MCF 10A (cell line): ENCODE measurements at regions of chr2 and their contacts with region 1.

Region 1: DNA sequence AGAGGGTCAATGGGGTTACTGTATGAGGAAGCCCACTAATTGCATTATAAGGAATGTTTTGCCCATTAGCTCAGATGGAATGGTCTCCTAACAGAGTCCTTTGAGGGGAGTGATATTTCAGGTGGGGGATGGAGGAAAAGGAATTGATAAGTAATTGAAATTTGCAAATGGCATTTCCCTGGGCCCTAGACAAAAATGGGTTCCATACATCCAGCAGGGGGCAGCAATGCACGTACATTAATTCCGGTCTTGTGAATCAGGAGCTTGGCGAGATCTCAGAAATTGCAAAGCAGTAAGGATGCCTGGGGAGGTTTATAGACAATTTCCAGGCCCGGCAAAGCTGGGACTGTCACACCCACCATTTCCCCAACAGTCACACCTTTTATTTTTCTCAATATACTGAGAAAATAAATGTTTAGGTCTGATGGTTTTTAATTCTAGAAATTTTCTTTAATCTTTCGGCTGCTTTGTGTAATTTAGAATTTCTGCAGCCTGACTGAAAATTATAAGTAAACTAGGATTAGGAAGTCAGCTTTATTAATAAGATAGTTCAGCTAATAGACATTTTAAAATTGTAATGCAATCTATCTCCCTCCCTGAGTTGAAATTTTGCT is 122.8 kb downstream of the LYPD1 start:
- DNase-seq: peak; percentile 84
- H3K4me3 Mint-ChIP-seq: no peak overlapping the region
- H3K27ac Mint-ChIP-seq: no peak overlapping the region
- H3K4me1 Mint-ChIP-seq: peaks cover 17% of the 10 kb centered on the region
- H3K27me3 Mint-ChIP-seq: no peaks in the 10 kb centered on the region
- CTCF ChIP-seq: peak; percentile 76

Region 2: DNA sequence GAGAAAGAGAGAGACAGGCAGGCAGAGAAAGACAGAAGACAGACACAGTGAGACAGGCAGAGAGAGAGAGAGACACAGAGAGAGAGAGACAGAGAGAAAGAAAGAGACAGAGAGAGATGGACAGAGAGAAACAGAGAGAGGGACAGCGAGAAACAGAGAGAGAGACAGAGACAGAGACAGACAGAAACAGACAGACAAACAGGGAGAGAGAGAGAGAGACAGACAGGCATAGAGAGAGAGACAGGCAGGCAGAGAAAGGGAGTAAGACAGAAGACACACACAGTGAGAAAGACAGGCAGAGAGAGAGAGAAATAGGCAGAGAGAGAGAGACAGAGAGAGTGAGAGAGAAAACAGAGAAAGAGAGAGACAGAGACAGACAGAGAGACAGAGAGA is 280.1 kb before region 1 on chr2:
- CTCF ChIA-PET with region 1: no interaction called
- POLR2A ChIA-PET with region 1: no interaction called
- intact Hi-C with region 1: loop called (anchors 10 kb)
- DNase-seq: no peak
- H3K4me3 Mint-ChIP-seq: no peak overlapping the region
- H3K27ac Mint-ChIP-seq: no peak overlapping the region
- H3K4me1 Mint-ChIP-seq: no peaks in the 10 kb centered on the region
- H3K27me3 Mint-ChIP-seq: no peaks in the 10 kb centered on the region
- CTCF ChIP-seq: no peak

Region 3: GRCh38 chr2:132562245-132562644 is 15.1 kb after region 1 on chr2:
- CTCF ChIA-PET with region 1: interaction called, 13 read pairs
- POLR2A ChIA-PET with region 1: no interaction called
- intact Hi-C with region 1: no loop called
- DNase-seq: no peak
- H3K4me3 Mint-ChIP-seq: no peak overlapping the region
- H3K27ac Mint-ChIP-seq: no peak overlapping the region
- H3K4me1 Mint-ChIP-seq: peaks cover 7% of the 10 kb centered on the region
- H3K27me3 Mint-ChIP-seq: no peaks in the 10 kb centered on the region
- CTCF ChIP-seq: no peak

Region 4: DNA sequence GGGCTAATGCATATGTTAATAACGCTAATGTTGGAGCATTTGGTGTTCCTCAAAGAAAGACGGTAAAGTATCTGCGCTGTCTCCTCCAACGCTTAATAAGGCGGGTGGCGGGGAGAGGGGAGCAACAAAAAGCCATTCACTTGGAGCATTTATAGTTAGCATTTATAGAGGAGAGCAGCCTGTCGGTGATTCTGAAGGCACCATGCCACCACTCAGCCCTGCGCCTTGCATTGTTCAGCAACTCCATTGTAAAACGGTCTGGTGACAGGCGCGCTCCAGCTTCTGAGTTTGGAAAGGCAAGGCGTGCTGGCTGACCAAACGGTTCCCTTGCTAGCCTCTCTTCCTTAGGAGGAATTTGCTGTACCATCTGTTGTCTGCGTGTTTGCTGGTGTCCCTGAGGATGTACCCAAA is 38.9 kb after region 1 on chr2:
- CTCF ChIA-PET with region 1: no interaction called
- POLR2A ChIA-PET with region 1: no interaction called
- intact Hi-C with region 1: no loop called
- DNase-seq: no peak
- H3K4me3 Mint-ChIP-seq: no peak overlapping the region
- H3K27ac Mint-ChIP-seq: no peak overlapping the region
- H3K4me1 Mint-ChIP-seq: no peaks in the 10 kb centered on the region
- H3K27me3 Mint-ChIP-seq: no peaks in the 10 kb centered on the region
- CTCF ChIP-seq: no peak

Region 5: DNA sequence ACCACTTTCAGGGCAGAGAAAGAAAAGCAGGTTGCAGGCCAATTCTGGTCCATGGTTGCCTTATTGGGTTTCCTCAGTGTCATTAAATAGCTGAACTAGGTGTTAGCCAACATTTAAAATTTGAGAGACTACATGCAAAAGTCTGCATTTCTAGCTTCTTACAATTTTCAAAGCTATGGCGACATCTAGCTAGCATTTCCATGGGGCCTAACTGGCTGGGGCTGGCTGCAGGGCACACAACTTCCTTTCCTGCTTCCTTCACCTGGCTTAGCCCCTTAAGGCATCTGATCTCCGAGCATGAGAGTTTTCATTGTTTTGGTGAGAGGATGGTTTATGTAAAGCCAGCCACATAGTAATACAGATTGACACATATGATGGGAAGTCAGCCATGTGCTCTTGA is 305.9 kb after region 1 on chr2:
- CTCF ChIA-PET with region 1: no interaction called
- POLR2A ChIA-PET with region 1: no interaction called
- intact Hi-C with region 1: loop called (anchors 5 kb)
- DNase-seq: peak; percentile 4
- H3K4me3 Mint-ChIP-seq: no peak overlapping the region
- H3K27ac Mint-ChIP-seq: no peak overlapping the region
- H3K4me1 Mint-ChIP-seq: no peaks in the 10 kb centered on the region
- H3K27me3 Mint-ChIP-seq: no peaks in the 10 kb centered on the region
- CTCF ChIP-seq: no peak

Region 6: GRCh38 chr2:133166031-133166430 is 618.9 kb after region 1 on chr2:
- CTCF ChIA-PET with region 1: interaction called, 26 read pairs
- POLR2A ChIA-PET with region 1: no interaction called
- intact Hi-C with region 1: loop called (anchors 1 kb)
- DNase-seq: no peak
- H3K4me3 Mint-ChIP-seq: no peak overlapping the region
- H3K27ac Mint-ChIP-seq: no peak overlapping the region
- H3K4me1 Mint-ChIP-seq: no peaks in the 10 kb centered on the region
- H3K27me3 Mint-ChIP-seq: no peaks in the 10 kb centered on the region
- CTCF ChIP-seq: no peak

Region 7: DNA sequence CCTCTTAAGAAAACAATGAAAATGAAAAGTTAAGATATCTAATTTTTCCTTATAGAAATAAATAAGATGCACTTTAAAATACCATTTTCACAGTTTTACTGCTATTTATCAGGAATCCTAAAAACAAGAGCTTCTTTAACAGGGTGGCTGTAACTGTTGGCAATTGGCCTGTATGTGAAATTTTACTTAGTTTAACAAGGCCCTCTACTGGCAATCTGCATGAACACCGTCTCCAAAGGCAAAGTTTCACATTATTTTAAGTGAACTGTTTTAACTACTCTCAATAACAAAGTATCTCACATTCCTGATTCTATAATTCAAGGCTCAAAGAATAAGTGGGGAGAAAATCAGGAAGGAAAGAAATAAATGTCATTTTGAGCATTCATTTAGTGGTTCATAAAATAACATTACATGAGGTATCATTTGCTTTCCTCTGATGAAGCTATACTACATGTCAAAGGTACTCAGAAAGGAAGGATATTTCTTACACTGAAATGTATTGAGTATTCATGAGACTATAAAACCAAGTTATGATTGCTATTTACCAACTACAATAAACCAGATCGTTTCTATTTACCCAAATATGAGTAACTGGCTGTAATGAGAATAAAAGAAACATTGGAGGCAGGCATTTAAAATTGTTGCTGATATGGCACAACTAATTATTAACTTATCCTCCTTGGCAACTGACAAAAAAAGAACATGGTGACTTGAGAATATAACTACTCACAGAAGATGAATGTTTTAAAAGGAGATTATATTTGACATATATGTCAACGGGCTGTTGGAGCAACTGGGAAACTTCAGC is 1014.1 kb after region 1 on chr2:
- CTCF ChIA-PET with region 1: interaction called, 14 read pairs
- POLR2A ChIA-PET with region 1: no interaction called
- intact Hi-C with region 1: loop called (anchors 1 kb)
- DNase-seq: peak; percentile 14
- H3K4me3 Mint-ChIP-seq: no peak overlapping the region
- H3K27ac Mint-ChIP-seq: no peak overlapping the region
- H3K4me1 Mint-ChIP-seq: no peaks in the 10 kb centered on the region
- H3K27me3 Mint-ChIP-seq: no peaks in the 10 kb centered on the region
- CTCF ChIP-seq: peak; percentile 59